GM12878 (cell line): ENCODE measurements at regions of chr5 and their contacts with region 1.

Region 1: GRCh38 chr5:149775785-149776184 is 45.7 kb downstream of the PPARGC1B start:
- DNase-seq: peak; percentile 23
- ATAC-seq: peak; percentile 72
- H3K4me3 ChIP-seq: no peak overlapping the region
- H3K27ac ChIP-seq: peak overlapping the region; percentile 67
- H3K4me1 ChIP-seq: peaks cover 55% of the 10 kb centered on the region
- H3K27me3 ChIP-seq: no peaks in the 10 kb centered on the region
- CTCF ChIP-seq: peak; percentile 62 to 72 (median 63)
- EP300 ChIP-seq: no peak
- POLR2A ChIP-seq: no peak
- RAD21 ChIP-seq: peak; percentile 51

Region 2: DNA sequence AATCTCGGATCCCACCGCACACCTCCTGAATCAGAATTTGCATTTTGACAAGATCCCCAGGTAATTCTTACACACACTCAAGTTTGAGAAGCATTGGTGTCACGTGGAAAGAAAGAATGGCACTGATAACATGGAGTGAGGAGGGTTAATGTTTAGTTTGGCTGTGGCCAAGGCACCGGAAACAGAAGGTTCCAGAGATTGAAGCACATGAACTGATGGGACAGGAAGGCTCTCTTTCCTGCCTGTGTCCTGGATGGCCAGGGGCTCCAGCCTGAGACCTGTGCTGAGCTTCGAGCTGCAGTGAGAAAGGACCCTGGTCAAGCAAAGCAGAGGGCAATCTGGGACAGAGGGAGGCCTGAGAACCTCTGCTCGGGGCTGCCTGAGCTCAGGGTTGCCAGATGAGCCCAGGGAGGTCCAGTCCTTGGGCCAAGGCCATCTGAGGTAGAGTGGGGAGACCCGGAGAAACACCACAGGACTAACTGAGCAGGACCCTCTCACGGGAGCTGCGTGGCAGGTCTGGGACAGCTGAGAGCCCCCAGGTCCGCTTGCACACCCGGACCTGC is 476.9 kb before region 1 on chr5:
- CTCF ChIA-PET with region 1: no interaction called
- POLR2A ChIA-PET with region 1: no interaction called
- RAD21 ChIA-PET with region 1: no interaction called
- SMC1A ChIA-PET with region 1: no interaction called
- in situ Hi-C with region 1: no loop called
- intact Hi-C with region 1: no loop called
- DNase-seq: no peak
- ATAC-seq: no peak
- H3K4me3 ChIP-seq: no peak overlapping the region
- H3K27ac ChIP-seq: no peak overlapping the region
- H3K4me1 ChIP-seq: peaks cover 12% of the 10 kb centered on the region
- H3K27me3 ChIP-seq: peaks cover 0 to 4% of the 10 kb centered on the region in 2 experiments; a peak in 2 of 4 replicates
- CTCF ChIP-seq: no peak
- EP300 ChIP-seq: no peak
- POLR2A ChIP-seq: no peak
- RAD21 ChIP-seq: no peak

Region 3: GRCh38 chr5:149656576-149657182 is 119.1 kb before region 1 on chr5:
- CTCF ChIA-PET with region 1: interaction called, 22 read pairs
- POLR2A ChIA-PET with region 1: no interaction called
- RAD21 ChIA-PET with region 1: interaction called, 13 read pairs
- SMC1A ChIA-PET with region 1: interaction called, 25 read pairs
- in situ Hi-C with region 1: no loop called
- intact Hi-C with region 1: no loop called
- DNase-seq: no peak
- ATAC-seq: peak; percentile 73
- H3K4me3 ChIP-seq: no peak overlapping the region
- H3K27ac ChIP-seq: no peak overlapping the region
- H3K4me1 ChIP-seq: no peaks in the 10 kb centered on the region
- H3K27me3 ChIP-seq: no peaks in the 10 kb centered on the region; a peak in 1 of 4 replicates
- CTCF ChIP-seq: peak; percentile 72 to 83 (median 76)
- EP300 ChIP-seq: no peak
- POLR2A ChIP-seq: no peak
- RAD21 ChIP-seq: peak; percentile 69

Region 4: GRCh38 chr5:149724130-149724840 is 51.5 kb before region 1 on chr5:
- CTCF ChIA-PET with region 1: interaction called, 10 read pairs
- POLR2A ChIA-PET with region 1: interaction called, 5 read pairs
- RAD21 ChIA-PET with region 1: interaction called, 7 read pairs
- SMC1A ChIA-PET with region 1: interaction called, 5 read pairs
- in situ Hi-C with region 1: no loop called
- intact Hi-C with region 1: no loop called
- DNase-seq: peak; percentile 43
- ATAC-seq: peak; percentile 97
- H3K4me3 ChIP-seq: no peak overlapping the region
- H3K27ac ChIP-seq: peak overlapping the region; percentile 52; the same call in 1 of the 2 replicates
- H3K4me1 ChIP-seq: peaks cover 6% of the 10 kb centered on the region
- H3K27me3 ChIP-seq: no peaks in the 10 kb centered on the region
- CTCF ChIP-seq: no peak
- EP300 ChIP-seq: no peak
- POLR2A ChIP-seq: no peak
- RAD21 ChIP-seq: no peak

Region 5: DNA sequence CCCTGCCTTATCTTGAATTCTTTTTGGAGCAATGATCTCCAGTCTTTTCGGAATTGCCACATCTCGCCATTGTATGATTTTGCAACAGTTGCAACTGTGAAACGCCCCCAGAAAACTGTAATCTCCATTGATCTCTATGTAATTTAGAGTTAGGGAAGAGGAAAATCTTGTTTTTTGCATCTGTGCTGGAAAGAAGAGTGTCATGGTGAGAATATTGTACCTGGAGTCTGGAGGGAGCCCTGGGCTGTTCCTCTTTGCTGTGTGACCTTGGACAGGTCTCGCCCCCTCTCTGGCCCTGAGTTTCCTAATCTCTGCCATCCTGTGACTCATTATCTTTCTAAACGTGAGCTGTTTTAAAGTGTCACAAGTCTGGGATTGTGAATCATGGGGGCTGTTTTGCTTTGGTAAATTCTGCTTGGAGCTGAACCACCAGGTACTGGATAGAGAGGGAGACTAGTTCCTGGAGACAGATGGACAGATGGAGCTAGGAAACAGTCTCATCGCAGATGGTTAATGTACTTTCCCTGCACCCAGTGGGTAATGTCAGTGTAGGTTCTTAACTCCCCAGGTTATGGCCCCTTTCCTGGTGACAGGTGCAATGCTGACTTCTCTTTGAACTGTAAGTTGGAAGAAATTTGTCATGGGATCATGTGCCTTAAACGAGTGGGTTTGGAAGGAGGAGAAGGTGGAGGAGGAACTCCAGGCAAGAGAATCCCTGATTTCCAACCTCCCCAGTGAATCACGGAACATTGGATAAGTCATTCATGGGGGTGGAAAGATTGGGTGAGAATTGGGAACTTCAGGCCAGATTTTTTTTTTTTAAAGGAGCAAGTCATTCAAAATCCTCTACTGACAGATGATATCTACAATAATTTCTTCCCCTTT is 26.1 kb before region 1 on chr5:
- CTCF ChIA-PET with region 1: interaction called, 13 read pairs
- POLR2A ChIA-PET with region 1: interaction called, 6 read pairs
- RAD21 ChIA-PET with region 1: interaction called, 4 read pairs
- SMC1A ChIA-PET with region 1: interaction called, 6 read pairs
- in situ Hi-C with region 1: no loop called
- intact Hi-C with region 1: no loop called
- DNase-seq: no peak
- ATAC-seq: no peak
- H3K4me3 ChIP-seq: no peak overlapping the region
- H3K27ac ChIP-seq: no peak overlapping the region
- H3K4me1 ChIP-seq: peaks cover 14% of the 10 kb centered on the region
- H3K27me3 ChIP-seq: no peaks in the 10 kb centered on the region
- CTCF ChIP-seq: no peak
- EP300 ChIP-seq: no peak
- POLR2A ChIP-seq: no peak
- RAD21 ChIP-seq: no peak

Region 6: DNA sequence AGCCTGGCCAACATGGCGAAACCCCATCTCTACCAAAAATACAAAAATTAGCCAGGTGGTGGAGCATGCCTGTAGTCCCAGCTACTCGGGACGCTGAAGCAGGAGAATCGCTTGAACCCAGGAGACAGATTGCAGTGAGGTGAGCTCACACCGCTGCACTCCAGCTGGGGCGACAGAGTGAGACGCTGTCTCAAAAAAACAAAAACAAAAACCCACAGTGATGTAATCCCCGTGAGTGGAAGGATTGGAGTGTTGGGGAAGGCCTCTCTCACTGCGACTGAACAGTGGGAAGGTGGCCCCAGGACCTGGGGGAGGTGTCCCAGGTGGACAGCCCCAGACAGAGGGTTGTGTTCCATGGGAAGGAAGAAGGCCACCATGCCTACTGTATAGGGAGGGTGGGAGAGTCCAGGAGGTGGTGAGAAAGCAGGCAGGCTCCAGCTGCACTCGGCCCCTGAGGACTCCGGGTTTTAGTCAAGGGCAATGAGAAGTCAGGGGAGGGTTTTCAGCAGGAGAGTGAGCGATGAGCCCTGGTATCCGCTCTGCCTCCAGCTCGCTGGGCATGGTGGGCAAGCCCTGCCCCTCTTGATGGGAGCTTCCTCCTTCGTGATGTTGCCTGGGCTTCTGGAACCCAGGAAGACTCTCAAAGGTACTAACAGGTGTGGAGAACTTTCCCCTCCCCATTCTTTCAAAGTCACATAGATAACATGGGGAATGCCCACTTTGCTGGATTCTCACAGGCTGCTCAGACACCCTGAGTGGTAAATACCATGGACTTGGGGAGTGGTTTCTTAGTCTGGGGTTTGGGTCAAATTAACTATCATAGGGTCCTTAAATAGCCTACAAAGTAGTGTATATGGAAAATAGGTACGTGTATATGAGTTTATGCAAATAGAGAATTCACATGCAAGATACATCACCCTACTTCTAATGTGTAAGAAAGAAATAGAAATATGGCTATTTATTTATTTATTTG is 29.0 kb after region 1 on chr5:
- CTCF ChIA-PET with region 1: interaction called, 67 read pairs
- POLR2A ChIA-PET with region 1: interaction called, 143 read pairs
- RAD21 ChIA-PET with region 1: interaction called, 109 read pairs
- SMC1A ChIA-PET with region 1: interaction called, 329 read pairs
- in situ Hi-C with region 1: no loop called
- intact Hi-C with region 1: loop called (anchors 1 kb)
- DNase-seq: peak; percentile 92
- ATAC-seq: peak; percentile 72
- H3K4me3 ChIP-seq: no peak overlapping the region
- H3K27ac ChIP-seq: peak overlapping the region; percentile 99
- H3K4me1 ChIP-seq: peaks cover 60% of the 10 kb centered on the region
- H3K27me3 ChIP-seq: no peaks in the 10 kb centered on the region
- CTCF ChIP-seq: no peak
- EP300 ChIP-seq: peak; percentile 34 to 45; a peak in 2 of 4 replicates
- POLR2A ChIP-seq: peak; percentile 59
- RAD21 ChIP-seq: peak; percentile 20; the same call in 1 of the 2 replicates

Region 7: DNA sequence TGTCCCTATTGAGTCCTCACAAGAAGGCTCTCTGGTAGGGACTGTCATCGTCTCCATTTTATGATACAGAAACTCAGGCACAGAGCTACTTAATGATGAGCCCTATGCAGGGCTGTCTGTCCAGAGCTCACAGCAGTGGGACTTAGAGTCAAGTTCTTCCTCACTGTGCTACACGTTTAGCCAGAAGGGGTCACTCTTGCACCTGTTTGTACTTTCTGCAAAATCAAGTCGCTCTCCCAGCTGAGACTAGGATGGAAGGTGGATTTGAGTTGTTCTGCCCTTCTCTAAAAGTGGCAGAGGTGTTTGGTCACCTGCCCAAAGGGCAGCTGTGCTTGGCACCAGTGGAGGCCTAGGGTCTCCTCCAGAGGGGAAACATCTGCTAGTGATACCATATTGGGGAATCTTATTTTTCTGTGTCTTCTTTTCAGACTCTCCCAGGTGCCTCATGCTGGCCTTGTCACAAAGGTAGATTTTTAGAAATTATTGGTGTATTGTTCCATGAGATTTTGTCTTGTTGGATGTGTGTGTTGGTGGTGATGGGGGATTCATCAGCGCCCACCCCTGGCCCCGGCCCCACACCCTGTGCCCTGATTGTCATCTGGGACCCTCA is 58.6 kb after region 1 on chr5:
- CTCF ChIA-PET with region 1: interaction called, 130 read pairs
- POLR2A ChIA-PET with region 1: interaction called, 11 read pairs
- RAD21 ChIA-PET with region 1: interaction called, 70 read pairs
- SMC1A ChIA-PET with region 1: interaction called, 88 read pairs
- in situ Hi-C with region 1: no loop called
- intact Hi-C with region 1: no loop called
- DNase-seq: no peak
- ATAC-seq: peak; percentile 55
- H3K4me3 ChIP-seq: no peak overlapping the region
- H3K27ac ChIP-seq: no peak overlapping the region
- H3K4me1 ChIP-seq: peaks cover 8% of the 10 kb centered on the region
- H3K27me3 ChIP-seq: no peaks in the 10 kb centered on the region
- CTCF ChIP-seq: peak; percentile 72 to 78 (median 75)
- EP300 ChIP-seq: no peak
- POLR2A ChIP-seq: no peak
- RAD21 ChIP-seq: peak; percentile 68

Region 8: DNA sequence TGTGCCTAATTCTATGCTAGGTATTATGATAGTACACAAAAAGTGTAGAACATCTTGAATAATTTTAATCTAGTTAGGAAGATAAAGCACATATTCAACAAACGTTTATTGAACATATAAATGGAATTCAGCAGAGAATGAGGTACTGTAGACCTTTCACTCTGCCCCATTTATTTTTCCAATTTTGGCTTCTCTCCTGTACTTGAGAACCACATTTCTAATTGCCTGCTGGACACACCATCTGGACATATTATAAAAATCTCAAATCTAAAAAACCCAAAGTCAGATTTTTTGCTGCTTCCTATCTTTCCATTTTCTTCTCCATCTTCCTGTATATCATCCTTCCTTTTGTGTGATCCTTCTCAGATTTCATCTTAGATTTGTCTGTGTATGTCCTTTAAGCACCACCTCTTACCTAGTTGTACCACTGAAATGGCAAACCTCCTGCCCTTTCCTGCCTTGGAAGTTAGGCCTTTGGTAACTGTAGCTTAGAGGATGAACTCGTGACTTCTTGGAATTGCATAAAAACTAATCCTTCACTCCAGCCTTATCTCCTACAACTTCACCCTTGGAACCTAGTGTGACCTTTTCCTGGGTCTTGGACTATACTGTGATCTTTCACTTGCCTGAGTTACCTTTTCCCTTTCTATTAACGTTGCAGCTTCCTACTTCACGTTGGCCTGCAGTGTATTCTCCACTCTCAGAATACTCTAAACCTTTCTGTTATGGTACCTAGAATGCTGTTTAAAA is 193.6 kb after region 1 on chr5:
- CTCF ChIA-PET with region 1: no interaction called
- POLR2A ChIA-PET with region 1: no interaction called
- RAD21 ChIA-PET with region 1: no interaction called
- SMC1A ChIA-PET with region 1: no interaction called
- in situ Hi-C with region 1: no loop called
- intact Hi-C with region 1: no loop called
- DNase-seq: no peak
- ATAC-seq: no peak
- H3K4me3 ChIP-seq: no peak overlapping the region
- H3K27ac ChIP-seq: no peak overlapping the region
- H3K4me1 ChIP-seq: no peaks in the 10 kb centered on the region
- H3K27me3 ChIP-seq: no peaks in the 10 kb centered on the region
- CTCF ChIP-seq: no peak
- EP300 ChIP-seq: no peak
- POLR2A ChIP-seq: no peak
- RAD21 ChIP-seq: no peak

Region 9: DNA sequence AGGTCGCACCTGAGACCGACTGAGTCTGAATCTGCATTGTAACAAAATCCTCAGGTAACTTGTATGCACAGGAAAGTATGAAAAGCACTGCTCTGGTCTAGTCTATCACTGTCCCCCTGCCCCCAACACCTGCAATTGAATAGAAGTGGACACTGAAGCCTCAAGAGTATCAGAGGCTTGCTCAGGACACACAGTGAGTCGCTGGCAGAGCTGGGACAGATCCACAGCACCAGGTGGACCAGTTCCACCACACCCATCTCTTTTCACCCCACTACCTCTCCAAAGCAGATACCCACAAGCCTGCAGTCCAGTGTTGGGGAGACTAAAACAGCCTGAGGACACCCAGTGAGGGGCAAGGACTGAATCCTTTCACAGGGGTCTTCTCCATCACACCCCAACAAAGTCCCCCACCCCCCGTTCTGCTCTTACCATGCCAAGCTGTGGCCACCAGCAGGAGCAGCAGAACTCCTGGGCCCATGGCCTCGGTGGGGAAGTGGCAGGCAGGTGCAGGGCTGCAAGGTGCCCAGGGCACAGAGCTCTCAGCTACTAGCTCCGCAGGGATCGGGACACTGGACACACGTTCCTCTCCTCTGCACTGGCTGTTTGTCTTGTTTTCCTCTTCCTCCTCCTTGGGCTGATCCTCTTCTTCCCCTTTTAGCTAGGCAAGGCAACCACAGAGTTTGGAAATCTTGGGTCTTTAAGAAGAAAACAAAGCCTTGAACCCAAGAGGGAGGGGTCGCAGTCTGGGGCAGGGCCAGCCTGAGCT is 310.3 kb after region 1 on chr5 and contains the start of gene CSF1R:
- CTCF ChIA-PET with region 1: no interaction called
- POLR2A ChIA-PET with region 1: no interaction called
- RAD21 ChIA-PET with region 1: no interaction called
- SMC1A ChIA-PET with region 1: no interaction called
- in situ Hi-C with region 1: no loop called
- intact Hi-C with region 1: no loop called
- DNase-seq: no peak
- ATAC-seq: no peak
- H3K4me3 ChIP-seq: no peak within 1 kb of the TSS
- H3K27ac ChIP-seq: no peak within 1 kb of the TSS
- H3K4me1 ChIP-seq: peaks cover 18% of the 10 kb centered on the region
- H3K27me3 ChIP-seq: no peaks in the 10 kb centered on the region
- CTCF ChIP-seq: no peak
- EP300 ChIP-seq: no peak
- POLR2A ChIP-seq: no peak
- RAD21 ChIP-seq: no peak
- polyA plus RNA-seq, gene CSF1R: 0.35 to 0.38 TPM